ENCODE measurements at regions of chr1 and their contacts with region 1.

Region 1: GRCh38 chr1:175192630-175193526 is at the start of gene KIAA0040:
- DNase-seq: peak; percentile 71
- H3K4me3 Mint-ChIP-seq: peak within 1 kb of the TSS; percentile 95
- H3K27ac Mint-ChIP-seq: peak within 1 kb of the TSS; percentile 93
- H3K4me1 Mint-ChIP-seq: peaks cover 48% of the 10 kb centered on the region
- H3K27me3 Mint-ChIP-seq: no peaks in the 10 kb centered on the region
- total RNA-seq, gene KIAA0040: 32.9 to 34.5 TPM

Region 2: GRCh38 chr1:174726880-174727585 is 465.8 kb before region 1 on chr1:
- CTCF ChIA-PET with region 1: no interaction called
- POLR2A ChIA-PET with region 1: no interaction called
- intact Hi-C with region 1: no loop called
- DNase-seq: no peak
- H3K4me3 Mint-ChIP-seq: no peak overlapping the region
- H3K27ac Mint-ChIP-seq: no peak overlapping the region
- H3K4me1 Mint-ChIP-seq: no peaks in the 10 kb centered on the region
- H3K27me3 Mint-ChIP-seq: no peaks in the 10 kb centered on the region

Region 3: DNA sequence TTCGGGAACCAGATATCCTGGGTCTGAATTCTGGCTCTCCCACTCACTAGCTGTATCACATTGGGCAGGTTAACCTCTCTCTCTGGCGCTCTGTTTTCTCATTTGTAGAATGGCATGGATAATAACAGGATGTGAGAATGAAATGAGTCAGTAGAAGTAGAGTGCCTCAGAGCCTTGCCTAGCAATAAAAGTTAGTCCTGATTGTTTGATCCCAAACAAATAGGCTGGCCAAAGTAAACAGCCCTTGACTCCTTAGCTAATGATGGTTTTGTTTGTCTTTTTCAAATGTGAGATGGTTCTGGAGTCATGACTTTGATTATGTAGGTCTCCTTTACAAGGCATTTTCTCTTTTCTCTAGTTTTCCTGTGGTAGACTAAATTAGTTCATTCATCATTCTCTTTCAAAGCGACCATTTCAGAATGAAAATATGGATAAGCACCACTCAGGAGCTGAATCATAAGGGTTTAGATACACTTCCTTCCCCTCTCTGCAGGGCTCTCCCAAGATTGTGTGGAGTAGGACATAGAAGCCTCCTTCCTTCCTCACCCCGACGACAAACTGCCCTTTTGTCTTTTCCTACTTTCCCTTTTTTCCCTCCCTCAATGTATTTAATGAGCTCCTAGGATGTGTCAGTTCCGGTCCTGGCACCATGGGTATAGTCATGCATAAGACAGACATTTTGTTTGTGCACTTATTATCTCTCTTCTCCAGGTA is 23.4 kb before region 1 on chr1:
- CTCF ChIA-PET with region 1: interaction called, 4 read pairs
- POLR2A ChIA-PET with region 1: interaction called, 6 read pairs
- intact Hi-C with region 1: loop called (anchors 1 kb)
- DNase-seq: no peak
- H3K4me3 Mint-ChIP-seq: no peak overlapping the region
- H3K27ac Mint-ChIP-seq: peak overlapping the region; percentile 6
- H3K4me1 Mint-ChIP-seq: peaks cover 49% of the 10 kb centered on the region
- H3K27me3 Mint-ChIP-seq: no peaks in the 10 kb centered on the region

Region 4: GRCh38 chr1:175208773-175209492 is 16.1 kb after region 1 on chr1:
- CTCF ChIA-PET with region 1: interaction called, 10 read pairs
- POLR2A ChIA-PET with region 1: interaction called, 8 read pairs
- intact Hi-C with region 1: loop called (anchors 1 kb)
- DNase-seq: peak; percentile 64
- H3K4me3 Mint-ChIP-seq: peak overlapping the region; percentile 64
- H3K27ac Mint-ChIP-seq: peak overlapping the region; percentile 93
- H3K4me1 Mint-ChIP-seq: peaks cover 76% of the 10 kb centered on the region
- H3K27me3 Mint-ChIP-seq: no peaks in the 10 kb centered on the region

Measured in activated CD4-positive, alpha-beta memory T cell treated with anti-CD3 and anti-CD28 coated beads for 36 hours (primary cell).